ENCODE measurements at regions of chr19 and their contacts with region 1.

Region 1: GRCh38 chr19:21505459-21506451 is at the start of gene ZNF429:
- DNase-seq: peak; percentile 92 to 96 (median 93)
- ATAC-seq: peak; percentile 98 to 100 (median 100)
- H3K4me3 ChIP-seq: peak within 1 kb of the TSS; percentile 58 to 94 (median 86)
- H3K27ac ChIP-seq: peak within 1 kb of the TSS; percentile 89 to 98 (median 94)
- H3K4me1 ChIP-seq: peaks cover 0 to 38% (median 22%) of the 10 kb centered on the region in 12 donors
- H3K27me3 ChIP-seq: no peaks in the 10 kb centered on the region
- CTCF ChIP-seq: peak in 3 of 12 donors; percentile 5 to 31 (median 19)
- POLR2A ChIP-seq: peak; percentile 46 to 63
- total RNA-seq, gene ZNF429: 4.6 to 10.1 (median 8.9) TPM

Region 2: GRCh38 chr19:21568816-21569493 is 63.2 kb after region 1 on chr19:
- intact Hi-C with region 1: loop called in 1 of 10 experiments (anchors 10 kb)
- DNase-seq: peak; percentile 91 to 97 (median 92)
- ATAC-seq: peak; percentile 99
- H3K4me3 ChIP-seq: peak overlapping the region; percentile 15 to 79 (median 53)
- H3K27ac ChIP-seq: peak overlapping the region in 10 of 12 donors; percentile 8 to 89 (median 72)
- H3K4me1 ChIP-seq: peaks cover 0 to 31% (median 2%) of the 10 kb centered on the region in 12 donors
- H3K27me3 ChIP-seq: no peaks in the 10 kb centered on the region
- CTCF ChIP-seq: no peak
- POLR2A ChIP-seq: peak in 1 of 2 donors; percentile 32

Region 3: DNA sequence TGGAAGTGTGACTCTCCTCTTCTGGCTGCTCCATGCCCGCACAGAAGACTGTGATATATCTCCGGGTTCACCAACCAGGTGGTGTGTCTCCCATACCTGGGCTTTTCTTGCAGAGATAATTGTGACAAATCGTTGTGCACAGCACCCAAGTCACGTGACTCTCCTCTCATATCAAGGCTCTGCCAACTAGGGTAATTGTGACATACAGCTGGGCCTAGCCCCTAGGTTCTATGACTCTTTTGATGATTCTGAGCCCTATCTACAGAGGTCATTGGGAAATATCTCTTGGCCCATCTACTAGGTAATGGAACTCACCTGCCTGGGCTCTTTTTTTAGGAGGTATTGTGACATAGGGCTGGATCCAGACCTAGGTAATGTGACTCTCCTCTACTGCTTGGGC is 89.4 kb after region 1 on chr19:
- intact Hi-C with region 1: loop called in 1 of 10 experiments (anchors 5 kb)
- DNase-seq: no peak
- ATAC-seq: no peak
- H3K4me3 ChIP-seq: no peak overlapping the region
- H3K27ac ChIP-seq: no peak overlapping the region
- H3K4me1 ChIP-seq: peaks cover 0 to 15% (median 0%) of the 10 kb centered on the region in 12 donors
- H3K27me3 ChIP-seq: no peaks in the 10 kb centered on the region
- CTCF ChIP-seq: no peak
- POLR2A ChIP-seq: no peak

Region 4: DNA sequence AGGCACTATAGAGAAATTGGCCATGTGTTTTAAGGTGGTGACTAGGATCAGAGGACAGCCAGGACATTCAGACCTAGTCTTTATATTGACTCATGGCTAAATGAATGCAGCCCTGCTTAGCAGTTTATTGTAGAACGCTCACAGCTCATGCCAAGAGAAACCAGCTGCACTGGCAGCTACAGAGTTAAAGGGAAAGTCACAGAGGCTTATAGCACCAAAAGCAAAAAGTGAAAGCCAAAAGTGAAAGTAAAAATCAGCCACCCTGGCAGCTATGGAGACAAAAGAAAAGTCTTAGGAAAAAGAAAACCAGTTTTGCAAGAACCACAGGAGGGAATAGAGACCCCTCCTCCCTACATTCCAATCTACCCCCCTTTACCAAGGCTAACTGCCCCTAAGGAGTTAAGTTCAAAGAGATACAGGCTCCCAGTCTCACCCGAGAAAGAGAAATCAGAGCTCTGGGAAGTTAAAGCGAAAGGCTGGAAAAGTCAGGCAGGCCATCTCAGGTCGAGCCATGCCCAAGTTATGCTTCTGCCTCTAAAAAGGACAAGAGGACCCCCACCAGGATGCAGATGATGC is 98.7 kb after region 1 on chr19:
- intact Hi-C with region 1: loop called in 2 of 10 experiments (anchors 2 to 5 kb)
- DNase-seq: no peak
- ATAC-seq: peak in 3 of 4 donors; percentile 18 to 52 (median 51)
- H3K4me3 ChIP-seq: peak overlapping the region; percentile 15 to 61 (median 52)
- H3K27ac ChIP-seq: peak overlapping the region; percentile 69 to 90 (median 82)
- H3K4me1 ChIP-seq: peaks cover 0 to 42% (median 18%) of the 10 kb centered on the region in 12 donors
- H3K27me3 ChIP-seq: no peaks in the 10 kb centered on the region
- CTCF ChIP-seq: no peak
- POLR2A ChIP-seq: no peak

Region 5: DNA sequence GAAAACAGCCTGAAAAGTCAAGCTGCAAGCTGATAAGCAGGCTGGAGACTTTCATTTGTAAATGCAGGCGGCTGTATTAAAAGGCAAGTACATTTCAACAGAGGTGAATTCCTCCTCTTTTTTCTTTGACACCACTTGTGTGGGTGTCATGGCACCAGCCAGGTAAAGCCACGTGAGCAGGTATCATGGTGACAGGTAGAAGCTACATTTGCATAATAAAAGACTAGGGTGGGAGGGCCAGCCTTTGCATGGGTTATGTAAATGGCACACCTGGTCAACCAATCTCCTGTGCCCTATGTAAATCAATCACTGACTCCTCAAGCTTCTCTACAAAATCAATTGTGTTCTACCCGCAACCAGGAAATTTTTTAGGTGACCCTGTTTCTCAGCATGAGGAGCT is 193.4 kb after region 1 on chr19:
- intact Hi-C with region 1: no loop called
- DNase-seq: no peak
- ATAC-seq: no peak
- H3K4me3 ChIP-seq: no peak overlapping the region
- H3K27ac ChIP-seq: no peak overlapping the region
- H3K4me1 ChIP-seq: peaks cover 0 to 3% (median 0%) of the 10 kb centered on the region in 12 donors
- H3K27me3 ChIP-seq: no peaks in the 10 kb centered on the region
- CTCF ChIP-seq: no peak
- POLR2A ChIP-seq: no peak

Region 6: GRCh38 chr19:21767065-21767800 is 261.5 kb after region 1 on chr19 and contains the start of gene ZNF100:
- intact Hi-C with region 1: loop called in 1 of 10 experiments (anchors 10 kb)
- DNase-seq: peak; percentile 93 to 97 (median 95)
- ATAC-seq: peak; percentile 95 to 99 (median 98)
- H3K4me3 ChIP-seq: peak within 1 kb of the TSS; percentile 60 to 95 (median 87)
- H3K27ac ChIP-seq: peak within 1 kb of the TSS; percentile 71 to 90 (median 84)
- H3K4me1 ChIP-seq: peaks cover 0 to 16% (median 6%) of the 10 kb centered on the region in 12 donors
- H3K27me3 ChIP-seq: no peaks in the 10 kb centered on the region
- CTCF ChIP-seq: no peak
- POLR2A ChIP-seq: peak in 1 of 2 donors; percentile 62
- total RNA-seq, gene ZNF100: 1.9 to 8.7 (median 5.5) TPM

Region 7: DNA sequence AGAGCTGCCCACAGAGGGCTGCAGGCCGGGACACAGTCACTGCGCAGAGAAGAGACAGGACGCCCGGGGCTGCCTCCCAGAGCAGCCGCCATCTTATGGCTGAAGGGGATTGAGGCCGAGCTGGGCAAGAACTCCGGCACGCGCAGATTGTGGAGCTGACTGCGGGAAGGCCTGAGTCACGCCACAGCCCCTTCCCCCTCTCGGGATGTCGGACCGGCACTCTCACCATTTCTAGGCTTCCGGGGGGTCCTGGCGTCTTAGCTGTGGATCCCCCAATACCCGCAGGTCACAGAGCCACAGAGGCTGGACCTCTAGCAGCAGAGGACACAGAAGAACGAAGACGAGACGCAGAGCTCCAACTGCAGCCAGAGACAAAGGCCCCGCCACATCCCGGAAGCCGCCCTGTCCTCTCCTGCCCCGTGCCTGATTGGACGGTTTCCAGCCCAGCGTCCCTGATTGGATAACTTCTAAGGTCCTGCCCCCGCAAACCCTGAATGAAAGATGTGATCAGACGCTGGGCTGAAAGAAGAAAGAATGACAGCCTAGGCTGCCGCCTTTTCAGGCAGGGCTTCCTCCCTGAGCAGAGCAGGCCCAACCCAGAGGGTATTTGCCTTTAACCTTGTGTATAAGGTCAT is 330.2 kb after region 1 on chr19 and contains the start of gene ZNF43:
- intact Hi-C with region 1: loop called in 1 of 10 experiments (anchors 10 kb)
- DNase-seq: peak; percentile 97 to 99 (median 98)
- ATAC-seq: peak; percentile 99
- H3K4me3 ChIP-seq: peak within 1 kb of the TSS; percentile 60 to 86 (median 75)
- H3K27ac ChIP-seq: peak within 1 kb of the TSS; percentile 83 to 95 (median 91)
- H3K4me1 ChIP-seq: peaks cover 0 to 17% (median 6%) of the 10 kb centered on the region in 12 donors
- H3K27me3 ChIP-seq: no peaks in the 10 kb centered on the region
- CTCF ChIP-seq: no peak
- POLR2A ChIP-seq: peak; percentile 32 to 86
- total RNA-seq, gene ZNF43: 3.8 to 13.8 (median 6.5) TPM

Measured in heart left ventricle (tissue), 16 donors.